Gastrocnemius medialis (tissue), 4 donors: ENCODE measurements at regions of chr10 and their contacts with region 1.

Region 1: DNA sequence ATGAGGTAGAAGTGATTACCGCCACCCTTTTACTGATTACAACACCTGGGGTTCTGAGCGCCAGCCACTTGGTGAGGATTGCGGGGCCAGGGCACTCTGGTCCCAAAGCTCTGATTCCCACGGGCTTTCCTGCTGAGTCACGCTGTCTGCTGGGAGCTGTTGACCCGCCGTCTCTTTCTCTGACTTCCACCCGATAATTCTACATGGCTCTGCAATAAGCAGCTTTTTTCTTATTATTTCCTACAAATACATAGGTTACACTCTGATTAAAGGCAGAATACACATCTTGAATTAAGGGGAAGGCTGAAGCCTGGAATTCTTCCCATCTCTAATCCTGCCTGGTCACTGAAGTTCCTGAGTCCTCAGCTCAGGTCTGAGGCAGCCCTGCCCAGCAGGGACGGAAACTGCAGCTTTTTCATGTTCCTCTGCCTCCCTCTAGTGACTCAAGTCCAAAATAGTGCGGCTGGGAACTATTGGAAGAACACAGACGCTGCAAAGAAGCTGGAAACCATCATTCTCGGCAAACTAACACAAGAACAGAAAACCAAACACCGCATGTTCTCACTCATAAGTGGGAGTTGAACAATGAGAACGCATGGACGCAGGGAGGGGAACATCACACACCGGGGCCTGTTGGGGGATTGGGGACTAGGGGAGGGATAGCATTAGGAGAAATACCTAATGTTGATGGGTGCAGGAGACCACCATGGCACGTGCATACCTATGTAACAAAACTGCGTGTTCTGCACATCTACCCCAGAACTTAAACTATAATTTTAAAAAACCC is 178.3 kb downstream of the PRKCQ start:
- DNase-seq: peak; percentile 68 to 78
- ATAC-seq: peak; percentile 95 to 96
- H3K4me3 ChIP-seq: peak overlapping the region; percentile 31 to 53 (median 49)
- H3K27ac ChIP-seq: peak overlapping the region; percentile 73 to 84 (median 76)
- H3K4me1 ChIP-seq: peaks cover 9 to 18% of the 10 kb centered on the region in 2 donors
- H3K27me3 ChIP-seq: no peaks in the 10 kb centered on the region
- CTCF ChIP-seq: peak; percentile 62 to 79 (median 76)
- POLR2A ChIP-seq: no peak

Region 2: GRCh38 chr10:6014241-6014761 is 387.5 kb before region 1 on chr10:
- in situ Hi-C with region 1: no loop called
- intact Hi-C with region 1: loop called (anchors 1 kb)
- DNase-seq: peak; percentile 24 to 29
- ATAC-seq: peak; percentile 60 to 66
- H3K4me3 ChIP-seq: peak overlapping the region in 1 of 4 donors; percentile 6
- H3K27ac ChIP-seq: no peak overlapping the region
- H3K4me1 ChIP-seq: no peaks in the 10 kb centered on the region
- H3K27me3 ChIP-seq: peaks cover 0 to 3% (median 0%) of the 10 kb centered on the region in 3 donors
- CTCF ChIP-seq: peak; percentile 43 to 75 (median 52)
- POLR2A ChIP-seq: no peak

Region 3: GRCh38 chr10:6108603-6109443 is 292.9 kb before region 1 on chr10:
- in situ Hi-C with region 1: loop called (anchors 5 to 10 kb)
- intact Hi-C with region 1: loop called (anchors 1 kb)
- DNase-seq: no peak
- ATAC-seq: peak in 1 of 2 donors; percentile 23
- H3K4me3 ChIP-seq: no peak overlapping the region
- H3K27ac ChIP-seq: peak overlapping the region; percentile 12 to 41 (median 35)
- H3K4me1 ChIP-seq: peaks cover 8 to 19% of the 10 kb centered on the region in 2 donors
- H3K27me3 ChIP-seq: no peaks in the 10 kb centered on the region
- CTCF ChIP-seq: peak; percentile 75 to 82 (median 77)
- POLR2A ChIP-seq: no peak

Region 4: GRCh38 chr10:6202684-6203330 is 198.9 kb before region 1 on chr10 and contains the start of gene PFKFB3:
- in situ Hi-C with region 1: no loop called
- intact Hi-C with region 1: loop called (anchors 1 kb)
- DNase-seq: peak; percentile 94 to 95
- ATAC-seq: peak; percentile 30 to 41
- H3K4me3 ChIP-seq: peak within 1 kb of the TSS; percentile 67 to 100 (median 90)
- H3K27ac ChIP-seq: peak within 1 kb of the TSS; percentile 89 to 98 (median 95)
- H3K4me1 ChIP-seq: peaks cover 44 to 46% of the 10 kb centered on the region in 2 donors
- H3K27me3 ChIP-seq: no peaks in the 10 kb centered on the region
- CTCF ChIP-seq: peak; percentile 94 to 100 (median 99)
- POLR2A ChIP-seq: peak; percentile 99 to 100
- total RNA-seq, gene PFKFB3: 218 to 1,159 (median 337) TPM

Region 5: DNA sequence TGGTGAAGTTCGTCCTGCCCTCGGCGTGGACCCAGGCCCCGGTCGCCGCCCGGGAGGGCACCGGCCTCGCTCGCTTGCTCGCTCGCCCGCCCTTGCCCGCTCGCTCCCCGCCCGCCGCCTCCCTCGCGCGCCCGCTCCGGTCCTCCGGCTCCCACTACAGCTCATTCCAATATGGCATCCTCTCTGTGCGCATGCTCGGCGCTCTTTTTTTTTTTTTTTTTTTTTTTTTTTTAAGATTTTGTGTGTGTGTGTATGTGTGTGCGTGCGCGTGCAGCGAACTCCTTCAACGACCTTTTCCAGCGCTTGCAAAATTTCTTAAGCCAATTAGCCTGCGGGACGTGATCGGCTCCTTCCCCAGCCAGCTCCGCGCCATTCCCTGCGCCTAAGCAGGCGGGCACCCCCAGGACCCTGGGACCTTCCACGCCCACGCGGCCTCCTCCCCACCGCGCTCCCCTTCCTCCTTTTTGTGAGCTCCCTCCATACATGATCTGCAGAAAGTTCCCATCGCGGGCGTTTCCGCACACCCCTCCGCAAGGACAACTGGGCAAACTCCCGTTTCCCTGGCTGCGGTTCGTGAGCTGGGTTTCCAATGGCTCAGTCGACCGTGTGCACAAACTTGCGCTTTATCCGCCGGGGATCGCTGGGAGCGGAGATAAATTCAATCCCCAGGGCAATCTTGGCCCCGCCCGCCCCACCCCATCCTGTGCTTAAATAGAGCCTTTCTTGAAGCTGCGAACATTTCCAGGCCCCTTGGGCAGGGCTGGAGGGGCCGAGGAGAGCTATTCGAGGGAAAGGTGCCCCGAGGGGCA is 1009.3 kb after region 1 on chr10 and contains the start of gene SFMBT2:
- in situ Hi-C with region 1: loop called in 1 of 4 experiments (anchors 25 kb)
- intact Hi-C with region 1: loop called (anchors 10 kb)
- DNase-seq: peak in 1 of 2 donors; percentile 52
- ATAC-seq: peak; percentile 46 to 55
- H3K4me3 ChIP-seq: peak within 1 kb of the TSS; percentile 58 to 83 (median 73)
- H3K27ac ChIP-seq: peak within 1 kb of the TSS; percentile 76 to 85 (median 82)
- H3K4me1 ChIP-seq: peaks cover 10 to 18% of the 10 kb centered on the region in 2 donors
- H3K27me3 ChIP-seq: no peaks in the 10 kb centered on the region
- CTCF ChIP-seq: no peak
- POLR2A ChIP-seq: peak; percentile 47 to 53
- total RNA-seq, gene SFMBT2: 1.1 to 6.9 (median 2.1) TPM